ENCODE measurements at regions of chr5 and their contacts with region 1.

Region 1: GRCh38 chr5:179065703-179066102 is 5.5 kb downstream of the ZNF354C start:
- DNase-seq: no peak
- ATAC-seq: no peak
- H3K4me3 Mint-ChIP-seq: no peak overlapping the region
- H3K27ac Mint-ChIP-seq: no peak overlapping the region
- H3K4me1 Mint-ChIP-seq: peaks cover 8% of the 10 kb centered on the region
- H3K27me3 Mint-ChIP-seq: no peaks in the 10 kb centered on the region

Region 2: DNA sequence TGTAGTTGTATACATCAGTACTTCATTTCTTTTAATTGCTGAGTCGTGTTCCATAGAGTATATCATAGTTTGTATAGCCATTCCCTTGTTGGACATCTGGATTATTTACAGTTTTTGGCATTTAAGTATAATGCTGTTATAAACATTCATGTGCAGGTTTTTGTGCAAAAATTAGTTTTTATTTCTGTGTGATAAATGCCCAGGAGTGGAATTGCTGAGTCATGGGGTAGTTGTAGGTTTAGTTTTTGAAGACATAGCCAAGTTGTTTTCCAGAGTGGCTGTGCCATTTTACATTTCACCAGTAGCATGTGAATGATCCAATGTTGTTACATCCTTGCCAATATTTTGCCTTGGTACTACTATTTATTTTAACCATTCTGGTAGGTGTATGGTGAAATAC is 193.4 kb before region 1 on chr5:
- CTCF ChIA-PET with region 1: no interaction called
- POLR2A ChIA-PET with region 1: no interaction called
- intact Hi-C with region 1: loop called in 1 of 2 experiments (anchors 5 kb)
- DNase-seq: no peak
- ATAC-seq: no peak
- H3K4me3 Mint-ChIP-seq: no peak overlapping the region
- H3K27ac Mint-ChIP-seq: no peak overlapping the region
- H3K4me1 Mint-ChIP-seq: peaks cover 5% of the 10 kb centered on the region
- H3K27me3 Mint-ChIP-seq: no peaks in the 10 kb centered on the region

Region 3: GRCh38 chr5:179177711-179178475 is 112.2 kb after region 1 on chr5:
- CTCF ChIA-PET with region 1: no interaction called
- POLR2A ChIA-PET with region 1: no interaction called
- intact Hi-C with region 1: no loop called
- DNase-seq: no peak
- ATAC-seq: no peak
- H3K4me3 Mint-ChIP-seq: no peak overlapping the region
- H3K27ac Mint-ChIP-seq: no peak overlapping the region
- H3K4me1 Mint-ChIP-seq: no peaks in the 10 kb centered on the region
- H3K27me3 Mint-ChIP-seq: peaks cover 13% of the 10 kb centered on the region